Activated CD8-positive, alpha-beta T cell treated with anti-CD3 and anti-CD28 coated beads, Interleukin-2, amount 10 ng/mL, durations not matched to agents 7 days and 5 days (primary cell): ENCODE measurements at regions of chr4 and their contacts with region 1.

Region 1: DNA sequence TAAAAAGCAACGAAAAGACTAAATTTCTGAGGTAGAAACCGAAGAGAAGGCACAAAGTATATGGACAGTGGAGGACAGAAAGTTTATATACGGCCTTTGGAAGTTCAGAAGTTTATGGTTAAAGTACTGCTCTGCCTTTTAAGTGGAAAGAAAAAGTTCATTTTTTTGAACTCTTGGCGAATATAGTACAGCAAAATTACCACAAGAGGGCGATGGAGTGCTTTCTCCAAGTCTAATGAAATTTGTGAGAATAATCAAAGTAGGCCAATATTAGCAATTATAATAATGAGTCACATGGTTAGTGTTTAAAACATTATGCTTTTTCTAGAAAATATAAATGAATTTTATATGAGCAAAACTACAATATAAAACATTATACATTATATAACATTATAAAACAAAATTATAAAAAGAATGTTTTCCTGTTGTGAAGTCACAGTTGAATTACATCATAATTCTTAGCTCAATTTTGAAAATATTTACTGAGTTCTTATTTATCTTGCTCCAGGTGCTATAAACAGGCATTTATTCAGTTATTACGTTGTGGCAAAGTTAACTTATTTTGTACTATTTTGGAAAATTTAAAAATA is 136.2 kb upstream of the BMPR1B start:
- DNase-seq: peak; percentile 29
- ATAC-seq: no peak
- H3K4me3 Mint-ChIP-seq: no peak overlapping the region
- H3K27ac Mint-ChIP-seq: no peak overlapping the region
- H3K4me1 Mint-ChIP-seq: no peaks in the 10 kb centered on the region
- H3K27me3 Mint-ChIP-seq: no peaks in the 10 kb centered on the region

Region 2: DNA sequence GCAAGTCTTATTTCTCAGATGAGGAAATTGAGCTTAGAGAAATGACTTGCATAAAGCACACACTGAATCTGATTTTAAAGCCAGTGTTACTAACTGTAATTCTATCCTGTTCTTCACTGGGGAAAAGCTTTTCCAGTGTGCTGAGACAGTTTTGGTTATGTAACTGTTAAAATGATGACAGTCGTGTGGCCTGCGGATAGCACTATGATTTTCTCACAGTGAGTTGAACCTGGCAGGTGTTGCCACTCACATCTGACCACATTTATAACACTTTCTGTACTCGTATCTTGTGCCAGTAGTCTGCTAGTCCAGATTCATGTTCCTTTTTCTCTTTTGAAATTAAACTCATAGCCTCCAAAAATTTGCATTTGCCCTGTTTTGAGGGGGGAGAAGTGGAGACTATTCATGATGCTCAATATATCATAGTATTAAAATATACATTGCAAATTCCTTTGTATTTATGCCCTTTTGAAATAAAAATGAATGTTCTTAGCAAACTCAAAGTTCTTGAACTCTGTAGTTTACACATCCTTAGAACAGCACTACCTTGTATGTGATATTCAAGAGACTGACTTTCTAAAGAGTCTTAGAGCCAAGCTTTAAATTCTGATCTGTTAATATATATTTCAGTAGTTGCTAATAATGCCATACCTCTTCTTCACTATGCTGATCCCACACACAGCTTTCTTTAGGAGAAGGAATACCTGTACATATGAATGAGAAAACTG is 37.5 kb before region 1 on chr4:
- CTCF ChIA-PET with region 1: no interaction called
- POLR2A ChIA-PET with region 1: no interaction called
- DNase-seq: no peak
- ATAC-seq: no peak
- H3K4me3 Mint-ChIP-seq: no peak overlapping the region
- H3K27ac Mint-ChIP-seq: no peak overlapping the region
- H3K4me1 Mint-ChIP-seq: no peaks in the 10 kb centered on the region
- H3K27me3 Mint-ChIP-seq: no peaks in the 10 kb centered on the region

Region 3: DNA sequence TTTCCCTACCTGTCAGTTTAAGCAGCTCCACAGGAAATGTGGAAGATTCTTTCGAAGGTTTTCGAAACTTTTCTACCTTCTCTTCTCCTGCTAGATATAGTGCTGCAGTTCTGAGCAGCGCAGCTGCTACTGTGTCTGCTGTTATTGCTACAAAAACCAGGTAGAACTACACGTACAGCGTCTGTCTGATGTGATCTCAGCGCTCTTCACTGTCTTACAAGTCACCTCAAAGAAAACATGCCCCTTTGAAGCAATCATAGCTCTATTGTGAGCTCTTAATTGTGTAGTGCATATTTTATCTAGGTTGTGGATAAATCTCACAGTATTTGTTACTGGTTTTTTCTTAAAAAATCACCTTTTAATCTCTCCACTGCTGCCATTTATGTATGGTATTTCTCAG is 11.4 kb before region 1 on chr4:
- CTCF ChIA-PET with region 1: interaction called, 16 read pairs
- POLR2A ChIA-PET with region 1: no interaction called
- DNase-seq: no peak
- ATAC-seq: no peak
- H3K4me3 Mint-ChIP-seq: no peak overlapping the region
- H3K27ac Mint-ChIP-seq: no peak overlapping the region
- H3K4me1 Mint-ChIP-seq: peaks cover 8% of the 10 kb centered on the region
- H3K27me3 Mint-ChIP-seq: no peaks in the 10 kb centered on the region

Region 4: GRCh38 chr4:94689155-94689860 is 67.7 kb after region 1 on chr4:
- CTCF ChIA-PET with region 1: no interaction called
- POLR2A ChIA-PET with region 1: no interaction called
- DNase-seq: no peak
- ATAC-seq: no peak
- H3K4me3 Mint-ChIP-seq: no peak overlapping the region
- H3K27ac Mint-ChIP-seq: no peak overlapping the region
- H3K4me1 Mint-ChIP-seq: no peaks in the 10 kb centered on the region
- H3K27me3 Mint-ChIP-seq: no peaks in the 10 kb centered on the region